Esophagus muscularis mucosa (tissue), 4 donors: ENCODE measurements at regions of chr19 and their contacts with region 1.

Region 1: GRCh38 chr19:12669270-12670158 is 2.9 kb downstream of the WDR83 start:
- DNase-seq: peak; percentile 97
- H3K4me3 ChIP-seq: peak overlapping the region; percentile 66 to 92 (median 72)
- H3K27ac ChIP-seq: peak overlapping the region; percentile 89 to 94 (median 92)
- H3K4me1 ChIP-seq: peaks cover 38 to 63% (median 50%) of the 10 kb centered on the region in 4 donors
- H3K27me3 ChIP-seq: no peaks in the 10 kb centered on the region
- CTCF ChIP-seq: peak in 1 of 3 experiments; percentile 22
- EP300 ChIP-seq: no peak
- POLR2A ChIP-seq: no peak

Region 2: GRCh38 chr19:12564016-12564664 is 105.4 kb before region 1 on chr19:
- intact Hi-C with region 1: loop called (anchors 1 kb)
- DNase-seq: peak; percentile 96
- H3K4me3 ChIP-seq: peak overlapping the region in 1 of 4 donors; percentile 22
- H3K27ac ChIP-seq: peak overlapping the region; percentile 32 to 71 (median 51)
- H3K4me1 ChIP-seq: peaks cover 7 to 9% (median 9%) of the 10 kb centered on the region in 4 donors
- H3K27me3 ChIP-seq: no peaks in the 10 kb centered on the region
- CTCF ChIP-seq: peak in 2 of 3 experiments; percentile 97 to 99
- EP300 ChIP-seq: no peak
- POLR2A ChIP-seq: no peak

Region 3: GRCh38 chr19:12689581-12690216 is 20.2 kb after region 1 on chr19:
- intact Hi-C with region 1: no loop called
- DNase-seq: no peak
- H3K4me3 ChIP-seq: no peak overlapping the region
- H3K27ac ChIP-seq: no peak overlapping the region
- H3K4me1 ChIP-seq: peaks cover 0 to under 1% (median under 1%) of the 10 kb centered on the region in 4 donors
- H3K27me3 ChIP-seq: no peaks in the 10 kb centered on the region
- CTCF ChIP-seq: no peak
- EP300 ChIP-seq: no peak
- POLR2A ChIP-seq: no peak

Region 4: DNA sequence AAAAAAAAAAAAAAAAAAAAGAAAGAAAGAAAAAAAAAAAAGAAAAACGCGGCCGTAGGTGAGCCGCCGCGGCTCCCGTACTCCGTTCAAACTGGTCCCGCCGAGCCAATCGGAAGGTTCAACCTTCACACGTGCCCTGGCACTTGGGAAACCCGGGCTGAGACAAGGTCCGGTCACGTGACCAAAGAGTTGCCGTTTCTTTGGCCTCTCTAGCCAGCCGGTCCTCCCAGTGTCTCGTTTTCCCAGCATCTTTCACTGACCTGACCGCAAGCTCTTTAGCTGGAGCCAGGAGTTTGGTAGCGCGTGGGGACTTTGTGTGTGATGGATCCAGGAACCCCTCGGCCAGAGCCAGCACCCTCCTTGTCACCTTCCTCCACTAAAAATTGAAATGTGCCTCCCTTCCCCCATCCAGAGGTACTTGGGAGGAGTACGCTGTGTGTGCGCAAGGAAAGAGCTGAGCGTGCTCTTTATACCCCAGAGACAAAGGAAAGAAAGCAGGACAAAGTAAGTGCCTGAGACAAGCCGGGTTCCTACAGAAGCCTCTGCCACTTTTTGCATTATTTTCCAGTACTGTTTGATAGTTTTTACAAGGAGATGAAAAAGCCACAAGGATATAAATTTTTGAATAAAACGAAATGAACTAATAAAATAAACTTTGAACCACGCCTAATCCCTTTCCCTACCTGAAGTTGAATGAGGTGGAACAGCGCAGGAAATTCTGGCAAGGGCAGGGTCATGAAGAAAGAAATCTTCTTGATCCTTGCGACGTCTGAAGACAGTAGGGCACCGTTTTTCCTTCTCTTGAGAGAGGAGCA is 53.3 kb after region 1 on chr19:
- intact Hi-C with region 1: loop called (anchors 5 kb)
- DNase-seq: peak; percentile 99
- H3K4me3 ChIP-seq: peak overlapping the region; percentile 88 to 98 (median 91)
- H3K27ac ChIP-seq: peak overlapping the region; percentile 97 to 99 (median 98)
- H3K4me1 ChIP-seq: peaks cover 46 to 56% (median 55%) of the 10 kb centered on the region in 4 donors
- H3K27me3 ChIP-seq: no peaks in the 10 kb centered on the region
- CTCF ChIP-seq: no peak
- EP300 ChIP-seq: no peak
- POLR2A ChIP-seq: no peak